ENCODE measurements at regions of chr12 and their contacts with region 1.

Region 1: GRCh38 chr12:69570545-69571399 is 14.5 kb upstream of the CCT2 start:
- DNase-seq: peak; percentile 15
- ATAC-seq: peak; percentile 97
- H3K4me3 ChIP-seq: no peak overlapping the region
- H3K27ac ChIP-seq: no peak overlapping the region; the same call in 1 of the 2 replicates
- H3K4me1 ChIP-seq: no peaks in the 10 kb centered on the region
- H3K27me3 ChIP-seq: no peaks in the 10 kb centered on the region
- CTCF ChIP-seq: peak; percentile 66 to 77 (median 72)
- EP300 ChIP-seq: no peak
- POLR2A ChIP-seq: no peak
- RAD21 ChIP-seq: peak; percentile 88

Region 2: DNA sequence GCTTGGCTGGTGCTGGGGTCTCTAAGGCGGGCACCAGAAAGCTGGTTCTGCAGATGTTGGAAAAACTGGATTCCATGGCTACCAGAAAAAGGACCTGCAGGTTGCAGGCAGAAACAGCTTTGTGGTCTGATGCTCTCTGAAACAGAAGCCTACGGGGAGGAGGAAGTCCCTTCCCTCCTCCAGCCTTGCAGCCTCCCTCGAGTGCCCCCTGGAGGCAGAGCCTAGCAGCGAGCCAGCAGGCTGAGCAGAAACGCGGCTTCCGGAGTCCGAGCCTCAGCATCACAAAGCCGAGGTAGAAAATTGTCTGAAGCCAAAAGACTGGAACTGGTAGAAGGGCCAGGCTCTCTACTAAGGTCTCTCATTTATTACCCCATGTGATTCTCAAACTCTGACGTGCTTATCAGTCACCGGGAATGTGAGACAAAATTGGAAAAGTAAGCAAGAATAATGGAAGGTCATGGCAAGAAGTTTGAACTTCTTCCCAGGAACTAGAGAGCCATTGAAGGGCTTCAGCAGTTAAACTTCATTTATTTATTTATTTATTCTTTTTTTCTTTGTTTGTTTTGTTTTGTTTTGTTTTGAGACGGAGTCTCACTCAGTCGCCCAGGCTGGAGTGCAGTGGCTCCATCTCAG is 413.6 kb before region 1 on chr12:
- CTCF ChIA-PET with region 1: interaction called, 11 read pairs
- POLR2A ChIA-PET with region 1: interaction called, 3 read pairs
- RAD21 ChIA-PET with region 1: interaction called, 17 read pairs
- SMC1A ChIA-PET with region 1: interaction called, 4 read pairs
- in situ Hi-C with region 1: loop called (anchors 10 kb)
- intact Hi-C with region 1: loop called (anchors 1 kb)
- DNase-seq: peak; percentile 64
- ATAC-seq: peak; percentile 94
- H3K4me3 ChIP-seq: no peak overlapping the region
- H3K27ac ChIP-seq: no peak overlapping the region
- H3K4me1 ChIP-seq: peaks cover 18% of the 10 kb centered on the region
- H3K27me3 ChIP-seq: no peaks in the 10 kb centered on the region
- CTCF ChIP-seq: peak; percentile 95 to 100 (median 99); a peak in 5 of 6 replicates
- EP300 ChIP-seq: no peak
- POLR2A ChIP-seq: peak; percentile 35; the same call in 1 of the 2 replicates
- RAD21 ChIP-seq: peak; percentile 66

Region 3: GRCh38 chr12:69359531-69360347 is 211.0 kb before region 1 on chr12 and contains the start of gene YEATS4:
- CTCF ChIA-PET with region 1: interaction called, 119 read pairs
- POLR2A ChIA-PET with region 1: interaction called, 6 read pairs
- RAD21 ChIA-PET with region 1: interaction called, 65 read pairs
- SMC1A ChIA-PET with region 1: interaction called, 94 read pairs
- in situ Hi-C with region 1: loop called (anchors 5 kb)
- intact Hi-C with region 1: loop called (anchors 1 kb)
- DNase-seq: peak; percentile 84
- ATAC-seq: peak; percentile 91
- H3K4me3 ChIP-seq: peak within 1 kb of the TSS; percentile 62
- H3K27ac ChIP-seq: peak within 1 kb of the TSS; percentile 98
- H3K4me1 ChIP-seq: no peaks in the 10 kb centered on the region; the same call in 1 of the 2 replicates
- H3K27me3 ChIP-seq: no peaks in the 10 kb centered on the region
- CTCF ChIP-seq: no peak
- EP300 ChIP-seq: no peak
- POLR2A ChIP-seq: peak; percentile 88
- RAD21 ChIP-seq: no peak
- polyA plus RNA-seq, gene YEATS4: 23.8 to 36.2 TPM

Region 4: DNA sequence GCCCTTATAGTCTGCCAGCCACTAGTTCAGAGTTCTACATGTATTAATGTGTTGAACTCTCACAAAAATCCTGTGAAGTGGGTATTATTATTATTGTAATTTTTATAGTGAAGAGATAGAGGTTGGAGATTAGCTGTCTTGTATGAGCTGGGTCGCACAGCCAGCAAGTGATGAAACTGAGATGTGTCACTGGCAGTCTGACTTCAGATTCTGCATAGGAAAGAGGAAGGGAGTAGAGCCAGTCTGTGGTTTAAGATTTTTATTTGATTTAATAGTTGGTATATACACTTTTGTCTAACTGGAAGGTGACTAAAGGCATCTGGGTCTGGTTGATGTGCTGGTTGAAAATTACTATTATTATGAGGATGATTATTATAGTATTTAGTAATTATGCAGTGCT is 106.3 kb before region 1 on chr12:
- CTCF ChIA-PET with region 1: interaction called, 38 read pairs
- POLR2A ChIA-PET with region 1: interaction called, 3 read pairs
- RAD21 ChIA-PET with region 1: interaction called, 13 read pairs
- SMC1A ChIA-PET with region 1: interaction called, 11 read pairs
- in situ Hi-C with region 1: no loop called
- intact Hi-C with region 1: no loop called
- DNase-seq: no peak
- ATAC-seq: peak; percentile 38; the same call in 1 of the 3 replicates
- H3K4me3 ChIP-seq: no peak overlapping the region
- H3K27ac ChIP-seq: no peak overlapping the region
- H3K4me1 ChIP-seq: peaks cover 8% of the 10 kb centered on the region; the same call in 1 of the 2 replicates
- H3K27me3 ChIP-seq: no peaks in the 10 kb centered on the region
- CTCF ChIP-seq: no peak
- EP300 ChIP-seq: no peak
- POLR2A ChIP-seq: no peak
- RAD21 ChIP-seq: no peak

Region 5: GRCh38 chr12:69548687-69549086 is 22.1 kb before region 1 on chr12:
- CTCF ChIA-PET with region 1: interaction called, 20 read pairs
- POLR2A ChIA-PET with region 1: no interaction called
- RAD21 ChIA-PET with region 1: interaction called, 5 read pairs
- SMC1A ChIA-PET with region 1: interaction called, 24 read pairs
- in situ Hi-C with region 1: no loop called
- intact Hi-C with region 1: no loop called
- DNase-seq: no peak
- ATAC-seq: no peak
- H3K4me3 ChIP-seq: no peak overlapping the region
- H3K27ac ChIP-seq: no peak overlapping the region
- H3K4me1 ChIP-seq: no peaks in the 10 kb centered on the region
- H3K27me3 ChIP-seq: no peaks in the 10 kb centered on the region
- CTCF ChIP-seq: no peak
- EP300 ChIP-seq: no peak
- POLR2A ChIP-seq: no peak
- RAD21 ChIP-seq: no peak

Region 6: DNA sequence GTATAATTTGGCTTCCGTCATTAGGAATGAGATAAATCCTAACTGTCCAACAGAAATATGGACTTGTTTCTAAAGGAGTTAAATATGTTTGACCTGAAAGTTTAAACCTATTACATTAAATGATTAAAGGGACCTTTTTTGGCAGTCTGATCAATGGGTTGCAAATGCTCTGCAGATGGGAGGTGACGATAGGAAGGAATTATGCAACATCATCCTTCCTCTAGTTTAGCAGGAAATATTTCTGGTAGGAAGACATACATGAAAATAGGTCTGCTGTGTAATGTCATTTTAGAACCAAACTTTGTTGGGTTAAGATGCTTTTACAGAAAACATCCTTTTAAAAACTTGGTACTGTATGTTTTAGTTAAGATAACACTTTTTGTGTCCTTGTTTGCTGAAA is 37.3 kb after region 1 on chr12:
- CTCF ChIA-PET with region 1: no interaction called
- POLR2A ChIA-PET with region 1: no interaction called
- RAD21 ChIA-PET with region 1: no interaction called
- SMC1A ChIA-PET with region 1: no interaction called
- in situ Hi-C with region 1: no loop called
- intact Hi-C with region 1: no loop called
- DNase-seq: no peak
- ATAC-seq: no peak
- H3K4me3 ChIP-seq: no peak overlapping the region
- H3K27ac ChIP-seq: no peak overlapping the region
- H3K4me1 ChIP-seq: no peaks in the 10 kb centered on the region
- H3K27me3 ChIP-seq: no peaks in the 10 kb centered on the region; a peak in 1 of 4 replicates
- CTCF ChIP-seq: no peak
- EP300 ChIP-seq: no peak
- POLR2A ChIP-seq: no peak
- RAD21 ChIP-seq: no peak

Region 7: DNA sequence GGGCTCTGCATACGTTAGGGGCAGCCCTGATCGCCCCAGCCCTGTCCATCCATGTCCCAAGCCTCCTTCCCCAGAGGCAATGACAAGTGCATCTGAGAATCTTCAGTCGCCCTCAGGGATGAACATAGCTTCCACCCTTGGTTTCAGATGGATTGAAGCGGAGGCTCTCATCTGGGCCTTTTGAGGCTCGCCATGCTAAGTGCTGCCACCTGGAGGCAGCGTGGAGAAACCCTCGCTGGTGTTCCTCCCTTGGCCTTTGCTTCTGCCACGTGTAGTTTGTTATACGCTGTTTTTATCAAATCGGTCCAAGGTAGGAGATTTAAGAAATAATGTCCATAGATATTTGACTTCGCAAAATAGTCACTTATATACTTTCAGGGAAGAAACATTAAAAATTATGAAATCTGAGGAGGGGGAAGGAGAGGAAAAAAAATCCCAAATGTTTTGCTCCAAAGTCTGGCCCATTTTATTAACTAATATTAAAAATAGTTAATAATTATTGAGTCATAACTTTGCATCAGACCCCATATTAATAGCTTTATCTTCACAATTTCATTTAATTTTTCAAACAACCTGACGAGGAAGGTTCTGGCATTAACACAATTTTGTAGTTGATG is 68.7 kb after region 1 on chr12:
- CTCF ChIA-PET with region 1: interaction called, 27 read pairs
- POLR2A ChIA-PET with region 1: no interaction called
- RAD21 ChIA-PET with region 1: interaction called, 8 read pairs
- SMC1A ChIA-PET with region 1: interaction called, 5 read pairs
- in situ Hi-C with region 1: no loop called
- intact Hi-C with region 1: no loop called
- DNase-seq: peak; percentile 15
- ATAC-seq: peak; percentile 96
- H3K4me3 ChIP-seq: no peak overlapping the region
- H3K27ac ChIP-seq: no peak overlapping the region
- H3K4me1 ChIP-seq: no peaks in the 10 kb centered on the region
- H3K27me3 ChIP-seq: no peaks in the 10 kb centered on the region
- CTCF ChIP-seq: peak; percentile 82 to 90 (median 87)
- EP300 ChIP-seq: no peak
- POLR2A ChIP-seq: no peak
- RAD21 ChIP-seq: peak; percentile 63